IMR-90 (cell line): ENCODE measurements at regions of chr17 and their contacts with region 1.

Region 1: GRCh38 chr17:7844292-7845154 is 10.3 kb upstream of the TMEM88 start:
- DNase-seq: peak; percentile 94
- ATAC-seq: peak; percentile 70
- H3K4me3 ChIP-seq: peak overlapping the region; percentile 71
- H3K27ac ChIP-seq: peak overlapping the region; percentile 72
- H3K4me1 ChIP-seq: peaks cover 13% of the 10 kb centered on the region
- H3K27me3 ChIP-seq: no peaks in the 10 kb centered on the region
- CTCF ChIP-seq: no peak
- POLR2A ChIP-seq: peak; percentile 92
- RAD21 ChIP-seq: no peak

Region 2: DNA sequence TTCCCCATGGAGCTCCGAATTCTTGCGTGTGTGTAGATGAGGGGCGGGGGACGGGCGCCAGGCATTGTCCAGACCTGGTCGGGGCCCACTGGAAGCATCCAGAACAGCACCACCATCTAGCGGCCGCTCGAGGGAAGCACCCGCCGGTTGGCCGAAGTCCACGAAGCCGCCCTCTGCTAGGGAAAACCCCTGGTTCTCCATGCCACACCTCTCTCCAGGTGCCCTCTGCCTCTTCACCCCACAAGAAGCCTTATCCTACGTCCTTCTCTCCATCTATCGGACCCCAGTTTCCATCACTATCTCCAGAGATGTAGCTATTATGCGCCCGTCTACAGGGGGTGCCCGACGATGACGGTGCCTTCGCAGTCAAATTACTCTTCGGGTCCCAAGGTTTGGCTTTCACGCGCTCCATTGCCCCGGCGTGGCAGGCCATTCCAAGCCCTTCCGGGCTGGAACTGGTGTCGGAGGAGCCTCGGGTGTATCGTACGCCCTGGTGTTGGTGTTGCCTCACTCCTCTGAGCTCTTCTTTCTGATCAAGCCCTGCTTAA is 283.4 kb before region 1 on chr17:
- CTCF ChIA-PET with region 1: no interaction called
- POLR2A ChIA-PET with region 1: no interaction called
- dilution Hi-C with region 1: no loop called
- in situ Hi-C with region 1: no loop called
- intact Hi-C with region 1: no loop called
- DNase-seq: peak; percentile 76
- ATAC-seq: peak; percentile 72
- H3K4me3 ChIP-seq: peak overlapping the region; percentile 79
- H3K27ac ChIP-seq: peak overlapping the region; percentile 84
- H3K4me1 ChIP-seq: peaks cover 9% of the 10 kb centered on the region
- H3K27me3 ChIP-seq: no peaks in the 10 kb centered on the region
- CTCF ChIP-seq: peak; percentile 94
- POLR2A ChIP-seq: no peak
- RAD21 ChIP-seq: peak; percentile 85

Region 3: DNA sequence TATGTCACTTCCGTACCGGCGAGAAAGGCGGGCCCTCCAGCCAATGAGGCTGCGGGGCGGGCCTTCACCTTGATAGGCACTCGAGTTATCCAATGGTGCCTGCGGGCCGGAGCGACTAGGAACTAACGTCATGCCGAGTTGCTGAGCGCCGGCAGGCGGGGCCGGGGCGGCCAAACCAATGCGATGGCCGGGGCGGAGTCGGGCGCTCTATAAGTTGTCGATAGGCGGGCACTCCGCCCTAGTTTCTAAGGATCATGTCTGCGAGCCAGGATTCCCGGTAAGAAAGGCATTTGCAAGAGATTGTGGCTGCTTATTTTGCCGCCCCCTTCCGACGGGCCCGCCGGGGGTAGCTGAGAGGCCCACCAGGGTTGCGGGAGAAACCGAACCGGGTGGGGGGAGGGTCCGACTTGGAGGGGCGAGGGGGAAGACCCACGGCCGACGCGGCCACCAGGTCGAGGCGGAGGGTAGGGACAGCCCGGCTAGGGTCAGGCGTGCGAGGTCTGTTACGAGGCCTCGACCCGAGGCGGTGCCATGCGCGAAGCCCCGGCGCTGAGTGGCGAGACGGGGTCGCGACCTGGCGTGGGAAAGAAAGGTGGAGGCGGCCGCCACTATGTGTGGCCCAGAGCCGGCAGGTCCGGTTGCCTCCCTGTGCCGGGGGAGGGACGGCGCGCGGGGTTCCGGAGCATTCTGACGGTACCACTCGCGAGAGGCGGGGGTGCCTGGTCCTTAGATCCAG is 271.8 kb before region 1 on chr17:
- CTCF ChIA-PET with region 1: no interaction called
- POLR2A ChIA-PET with region 1: no interaction called
- dilution Hi-C with region 1: no loop called
- in situ Hi-C with region 1: no loop called
- intact Hi-C with region 1: loop called (anchors 5 kb)
- DNase-seq: peak; percentile 99
- ATAC-seq: peak; percentile 88
- H3K4me3 ChIP-seq: peak overlapping the region; percentile 77
- H3K27ac ChIP-seq: peak overlapping the region; percentile 97
- H3K4me1 ChIP-seq: peaks cover 8% of the 10 kb centered on the region
- H3K27me3 ChIP-seq: no peaks in the 10 kb centered on the region
- CTCF ChIP-seq: no peak
- POLR2A ChIP-seq: peak; percentile 100
- RAD21 ChIP-seq: no peak

Region 4: DNA sequence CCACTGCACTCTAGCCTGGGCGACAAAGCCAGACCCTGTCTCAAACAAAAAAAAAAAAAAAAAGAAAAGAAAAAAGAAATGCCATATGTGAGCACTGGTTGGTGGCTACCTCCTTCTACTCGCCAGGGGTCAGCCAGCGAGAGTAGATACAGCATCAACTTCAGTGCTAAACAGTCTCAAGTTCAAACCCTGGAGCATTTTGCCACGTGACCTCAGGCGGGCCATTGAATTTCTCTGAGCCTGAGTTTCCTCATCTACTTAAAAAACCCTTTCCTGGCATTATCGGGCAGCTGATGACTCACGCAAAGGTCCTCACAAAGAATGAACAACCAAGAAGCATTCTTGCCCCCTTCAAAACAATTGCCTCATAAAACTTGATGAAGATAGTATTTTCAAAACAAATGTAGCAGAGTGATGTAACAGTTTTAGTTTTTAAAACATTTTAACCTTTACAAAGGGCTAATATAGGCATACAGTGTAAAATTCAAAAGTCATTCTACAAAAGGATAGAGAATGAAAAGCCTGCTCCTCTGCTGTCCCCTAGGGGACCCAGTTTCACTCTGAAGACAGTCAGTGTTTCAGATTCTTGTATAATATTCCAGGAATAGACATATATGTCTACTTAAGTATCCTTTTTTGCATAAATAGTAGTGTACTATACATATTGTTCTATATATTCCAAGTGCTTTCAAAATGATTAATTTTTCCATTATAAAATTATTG is 98.6 kb before region 1 on chr17:
- CTCF ChIA-PET with region 1: no interaction called
- POLR2A ChIA-PET with region 1: no interaction called
- dilution Hi-C with region 1: no loop called
- in situ Hi-C with region 1: no loop called
- intact Hi-C with region 1: loop called (anchors 2 kb)
- DNase-seq: peak; percentile 76
- ATAC-seq: peak; percentile 21
- H3K4me3 ChIP-seq: no peak overlapping the region
- H3K27ac ChIP-seq: peak overlapping the region; percentile 5; the same call in 1 of the 2 replicates
- H3K4me1 ChIP-seq: peaks cover 21% of the 10 kb centered on the region
- H3K27me3 ChIP-seq: peaks cover under 1% of the 10 kb centered on the region
- CTCF ChIP-seq: 0 out of 2 replicates have a peak, but pooled peaks have one; percentile 13
- POLR2A ChIP-seq: no peak
- RAD21 ChIP-seq: no peak

Region 5: DNA sequence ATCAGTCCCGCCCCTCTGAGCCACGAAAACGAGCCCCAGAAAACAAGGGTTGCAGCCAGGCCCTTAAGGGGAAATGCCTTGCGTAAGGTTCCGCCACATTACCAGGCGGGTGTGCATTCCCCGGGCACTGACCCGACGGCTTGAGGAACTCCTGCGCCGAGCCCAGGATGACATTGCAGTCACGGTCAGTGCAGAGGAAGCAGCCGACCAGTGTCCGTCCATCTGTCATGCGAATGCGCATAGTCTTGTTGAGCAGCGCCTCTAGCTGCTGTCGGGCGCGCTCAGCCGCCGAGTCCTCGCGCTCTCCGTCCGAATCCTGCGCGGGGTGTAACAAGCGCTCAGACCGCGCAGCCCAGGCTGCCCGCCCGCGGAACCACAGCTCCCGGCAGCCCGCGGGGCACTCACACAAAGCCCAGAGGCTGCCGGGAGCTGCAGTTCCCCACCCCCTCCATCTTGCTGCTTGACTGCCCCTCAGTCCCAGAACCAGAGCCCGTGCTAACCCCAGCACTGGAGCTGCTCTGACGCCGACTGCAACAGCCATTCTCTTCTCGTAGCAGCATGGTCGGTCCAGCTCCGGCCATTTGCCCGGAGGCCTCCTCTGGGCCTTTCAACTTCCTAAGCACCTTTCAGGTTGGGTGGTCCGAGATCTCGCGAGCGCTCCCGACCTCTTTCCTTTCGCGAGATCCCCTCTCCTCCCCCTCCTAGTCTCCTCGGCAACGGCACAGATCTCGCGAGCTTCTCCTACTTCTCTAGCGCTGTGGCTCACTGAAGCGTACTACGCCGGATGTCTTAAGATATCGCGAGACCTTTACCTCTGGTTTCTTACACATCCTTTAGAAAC is 12.6 kb after region 1 on chr17 and contains the start of gene NAA38:
- CTCF ChIA-PET with region 1: interaction called, 3 read pairs
- POLR2A ChIA-PET with region 1: interaction called, 3 read pairs
- dilution Hi-C with region 1: no loop called
- in situ Hi-C with region 1: no loop called
- intact Hi-C with region 1: loop called (anchors 2 kb)
- DNase-seq: peak; percentile 100
- ATAC-seq: peak; percentile 88
- H3K4me3 ChIP-seq: peak within 1 kb of the TSS; percentile 59
- H3K27ac ChIP-seq: peak within 1 kb of the TSS; percentile 94
- H3K4me1 ChIP-seq: peaks cover 20% of the 10 kb centered on the region
- H3K27me3 ChIP-seq: no peaks in the 10 kb centered on the region
- CTCF ChIP-seq: peak; percentile 51
- POLR2A ChIP-seq: peak; percentile 66; the same call in 1 of the 2 replicates
- RAD21 ChIP-seq: peak; percentile 38
- total RNA-seq, gene NAA38: 40.7 and 62.2 TPM in 2 replicates